B cell (primary cell): ENCODE measurements at regions of chr20 and their contacts with region 1.

Region 1: GRCh38 chr20:50815162-50815989 is 20.5 kb downstream of the BCAS4 start:
- DNase-seq: peak; percentile 63
- ATAC-seq: peak; percentile 72
- H3K4me3 ChIP-seq: peak overlapping the region in 4 of 5 experiments; percentile 19 to 46 (median 38)
- H3K4me3 Mint-ChIP-seq: peak overlapping the region; percentile 88
- H3K27ac ChIP-seq: peak overlapping the region; percentile 57 to 77
- H3K27ac Mint-ChIP-seq: peak overlapping the region; percentile 97
- H3K4me1 ChIP-seq: peaks cover 87 to 98% of the 10 kb centered on the region in 2 donors
- H3K4me1 Mint-ChIP-seq: peaks cover 86% of the 10 kb centered on the region
- H3K27me3 ChIP-seq: no peaks in the 10 kb centered on the region
- H3K27me3 Mint-ChIP-seq: no peaks in the 10 kb centered on the region
- CTCF ChIP-seq: no peak

Region 2: DNA sequence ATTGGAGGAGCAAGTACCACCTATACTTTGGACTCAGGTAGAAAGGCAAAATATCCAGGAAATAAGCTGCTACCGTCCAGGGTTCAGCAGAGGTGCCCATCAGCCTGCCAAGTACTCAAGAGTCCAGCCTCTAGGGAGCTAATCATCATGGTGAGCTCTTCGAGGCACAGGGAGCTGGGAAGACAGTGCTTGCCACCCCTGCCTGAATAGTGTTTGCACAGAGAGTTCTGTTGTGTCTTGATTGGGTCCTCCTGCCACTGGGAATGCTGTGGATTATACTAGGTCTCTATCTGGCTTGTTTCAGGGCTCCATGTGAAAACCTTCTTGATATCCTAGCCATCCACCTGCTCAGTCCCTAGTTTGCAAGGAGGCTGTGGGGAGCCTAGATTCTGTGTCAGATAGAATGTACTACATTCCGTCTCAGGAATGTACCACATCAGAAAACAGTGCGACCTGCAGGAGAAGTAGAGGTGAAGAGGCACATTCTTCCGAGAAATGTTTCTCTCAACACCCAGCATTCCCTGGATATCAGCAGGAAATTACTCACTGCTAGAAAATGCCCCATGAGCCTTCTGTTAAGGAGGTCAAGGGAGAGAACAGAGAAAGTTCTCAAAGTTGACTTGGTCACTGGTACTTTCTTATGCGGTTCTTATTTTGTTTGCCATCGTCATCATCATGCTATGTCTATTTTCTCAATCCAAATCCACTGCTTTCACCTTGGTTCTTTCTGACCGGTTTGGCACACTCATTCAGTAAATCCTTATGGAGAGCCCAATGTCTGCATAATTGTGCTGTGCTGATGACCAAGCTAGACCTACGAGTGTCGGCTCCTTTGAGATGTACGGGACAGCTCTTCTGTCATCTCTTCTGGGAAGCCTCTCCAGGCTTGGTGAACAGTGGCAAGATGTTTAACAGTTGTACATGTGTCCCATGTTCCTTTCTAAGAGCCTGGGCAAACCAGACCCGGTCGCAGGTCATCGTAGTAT is 274.5 kb before region 1 on chr20:
- CTCF ChIA-PET with region 1: no interaction called
- POLR2A ChIA-PET with region 1: no interaction called
- intact Hi-C with region 1: loop called (anchors 10 kb)
- DNase-seq: no peak
- ATAC-seq: no peak
- H3K4me3 ChIP-seq: peak overlapping the region in 4 of 5 experiments; percentile 3 to 23 (median 11)
- H3K4me3 Mint-ChIP-seq: peak overlapping the region; percentile 87
- H3K27ac ChIP-seq: peak overlapping the region; percentile 74 to 76
- H3K27ac Mint-ChIP-seq: peak overlapping the region; percentile 97
- H3K4me1 ChIP-seq: peaks cover 73 to 89% of the 10 kb centered on the region in 2 donors
- H3K4me1 Mint-ChIP-seq: peaks cover 76% of the 10 kb centered on the region
- H3K27me3 ChIP-seq: no peaks in the 10 kb centered on the region
- H3K27me3 Mint-ChIP-seq: no peaks in the 10 kb centered on the region
- CTCF ChIP-seq: no peak

Region 3: DNA sequence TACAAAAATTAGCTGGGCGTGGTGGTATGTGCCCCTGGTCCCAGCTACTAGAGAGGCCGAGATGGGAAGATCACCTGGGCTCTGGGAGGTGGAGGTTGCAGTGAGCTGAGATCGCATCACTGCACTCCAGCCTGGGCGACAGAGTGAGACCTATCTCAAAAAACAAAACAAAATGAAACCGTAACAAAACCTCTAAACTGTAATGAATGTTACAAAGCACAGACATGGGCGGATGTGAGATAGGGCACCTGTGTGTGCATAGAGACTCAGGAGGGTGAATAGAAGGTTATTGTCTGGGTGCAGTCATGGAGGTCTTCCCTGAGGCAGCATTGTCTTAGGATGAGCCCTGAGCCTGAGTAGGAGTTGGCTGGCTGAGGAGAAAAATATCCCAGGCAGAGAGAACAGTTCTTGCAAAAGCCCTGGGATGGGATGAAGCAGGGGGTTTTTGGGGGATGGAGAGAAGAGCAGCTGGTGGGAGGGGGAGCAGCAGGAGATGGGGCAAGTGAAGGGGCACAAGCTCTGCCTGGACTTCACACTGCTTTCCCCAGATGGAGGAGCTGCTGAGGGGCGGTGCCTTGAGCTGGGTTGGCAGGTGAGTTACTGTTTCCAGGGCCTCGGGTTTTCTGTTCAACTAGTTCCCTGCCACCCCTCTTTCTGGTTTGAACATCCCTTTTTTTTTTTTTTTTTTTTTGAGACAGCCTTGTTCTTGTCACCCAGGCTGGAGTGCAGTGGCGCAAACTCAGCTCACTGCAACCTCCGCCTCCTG is 15.3 kb before region 1 on chr20:
- CTCF ChIA-PET with region 1: interaction called, 340 read pairs
- POLR2A ChIA-PET with region 1: interaction called, 54 read pairs
- intact Hi-C with region 1: loop called (anchors 1 kb)
- DNase-seq: peak; percentile 62
- ATAC-seq: peak; percentile 52
- H3K4me3 ChIP-seq: peak overlapping the region in 3 of 5 experiments; percentile 8 to 21 (median 15)
- H3K4me3 Mint-ChIP-seq: peak overlapping the region; percentile 83
- H3K27ac ChIP-seq: peak overlapping the region; percentile 77 to 83
- H3K27ac Mint-ChIP-seq: peak overlapping the region; percentile 98
- H3K4me1 ChIP-seq: peaks cover 51 to 68% of the 10 kb centered on the region in 2 donors
- H3K4me1 Mint-ChIP-seq: peaks cover 64% of the 10 kb centered on the region
- H3K27me3 ChIP-seq: no peaks in the 10 kb centered on the region
- H3K27me3 Mint-ChIP-seq: no peaks in the 10 kb centered on the region
- CTCF ChIP-seq: no peak

Region 4: GRCh38 chr20:50844430-50845100 is 29.2 kb after region 1 on chr20:
- CTCF ChIA-PET with region 1: interaction called, 3 read pairs
- POLR2A ChIA-PET with region 1: no interaction called
- intact Hi-C with region 1: loop called (anchors 2 kb)
- DNase-seq: no peak
- ATAC-seq: peak; percentile 82
- H3K4me3 ChIP-seq: no peak overlapping the region
- H3K4me3 Mint-ChIP-seq: peak overlapping the region; percentile 23
- H3K27ac ChIP-seq: no peak overlapping the region
- H3K27ac Mint-ChIP-seq: peak overlapping the region; percentile 80
- H3K4me1 ChIP-seq: peaks cover 14 to 45% of the 10 kb centered on the region in 2 donors
- H3K4me1 Mint-ChIP-seq: peaks cover 44% of the 10 kb centered on the region
- H3K27me3 ChIP-seq: no peaks in the 10 kb centered on the region
- H3K27me3 Mint-ChIP-seq: no peaks in the 10 kb centered on the region
- CTCF ChIP-seq: no peak

Region 5: GRCh38 chr20:50958615-50959542 is 143.5 kb after region 1 on chr20 and contains the start of gene MOCS3:
- CTCF ChIA-PET with region 1: no interaction called
- POLR2A ChIA-PET with region 1: interaction called, 3 read pairs
- intact Hi-C with region 1: loop called (anchors 1 kb)
- DNase-seq: peak; percentile 95
- ATAC-seq: peak; percentile 80
- H3K4me3 ChIP-seq: peak within 1 kb of the TSS; percentile 78 to 99 (median 86)
- H3K4me3 Mint-ChIP-seq: peak within 1 kb of the TSS; percentile 98
- H3K27ac ChIP-seq: peak within 1 kb of the TSS; percentile 81 to 99
- H3K27ac Mint-ChIP-seq: peak within 1 kb of the TSS; percentile 99
- H3K4me1 ChIP-seq: peaks cover 24 to 26% of the 10 kb centered on the region in 2 donors
- H3K4me1 Mint-ChIP-seq: peaks cover 40% of the 10 kb centered on the region
- H3K27me3 ChIP-seq: no peaks in the 10 kb centered on the region
- H3K27me3 Mint-ChIP-seq: no peaks in the 10 kb centered on the region
- CTCF ChIP-seq: no peak
- total RNA-seq, gene MOCS3: 7.6 and 7.9 TPM in 2 replicates